ENCODE measurements at regions of chr17 and their contacts with region 1.

Region 1: GRCh38 chr17:77247048-77247541 is 106.3 kb downstream of the SEC14L1 start:
- DNase-seq: peak; percentile 94
- ATAC-seq: peak; percentile 96

Region 2: DNA sequence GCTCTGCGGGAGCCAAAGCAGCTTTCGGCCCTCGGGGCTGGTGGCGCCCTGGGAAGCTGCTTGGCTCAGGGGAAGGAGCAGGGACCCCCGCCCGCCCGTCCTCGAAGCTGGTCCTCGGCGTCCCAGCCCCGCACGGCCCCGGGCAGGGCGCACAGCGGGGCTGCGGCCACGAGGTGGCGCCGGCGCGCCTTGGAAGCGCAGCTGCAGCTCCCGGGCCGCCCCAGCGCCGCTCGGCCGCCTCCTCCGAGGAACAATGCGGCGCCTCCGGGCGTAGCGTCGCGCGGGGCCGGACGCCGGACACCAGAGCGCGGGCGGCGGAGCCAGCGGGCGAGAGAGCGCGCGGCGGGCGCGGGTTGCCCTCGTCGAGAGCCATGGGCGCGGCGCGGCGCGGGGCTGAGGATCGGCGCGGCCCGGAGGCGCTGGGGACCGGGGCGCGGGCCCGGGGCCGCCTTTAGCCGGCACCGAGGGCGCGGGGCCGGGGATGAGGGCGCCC is 378.9 kb before region 1 on chr17 and contains the start of gene MGAT5B:
- intact Hi-C with region 1: loop called (anchors 2 kb)
- DNase-seq: peak; percentile 89
- ATAC-seq: peak; percentile 95
- total RNA-seq, gene MGAT5B: not detected

Region 3: GRCh38 chr17:77088455-77089123 is 158.5 kb before region 1 on chr17:
- intact Hi-C with region 1: loop called (anchors 1 kb)
- DNase-seq: peak; percentile 94
- ATAC-seq: peak; percentile 94

Measured in Right ventricle myocardium inferior (tissue), 1 donor.